Ascending aorta (tissue), 2 donors: ENCODE measurements at regions of chr16 and their contacts with region 1.

Region 1: GRCh38 chr16:77190478-77191258 is at the start of gene MON1B:
- DNase-seq: peak; percentile 96 to 99
- H3K4me3 ChIP-seq: peak within 1 kb of the TSS; percentile 63 to 72
- H3K27ac ChIP-seq: peak within 1 kb of the TSS; percentile 93 to 95
- H3K4me1 ChIP-seq: peaks cover 0 to 11% of the 10 kb centered on the region in 2 donors
- H3K27me3 ChIP-seq: no peaks in the 10 kb centered on the region
- CTCF ChIP-seq: peak in 2 of 3 experiments; percentile 11 to 21
- total RNA-seq, gene MON1B: 31.9 TPM

Region 2: GRCh38 chr16:77132051-77132618 is 58.5 kb before region 1 on chr16:
- intact Hi-C with region 1: no loop called
- DNase-seq: no peak
- H3K4me3 ChIP-seq: no peak overlapping the region
- H3K27ac ChIP-seq: no peak overlapping the region
- H3K4me1 ChIP-seq: no peaks in the 10 kb centered on the region
- H3K27me3 ChIP-seq: no peaks in the 10 kb centered on the region
- CTCF ChIP-seq: no peak

Region 3: DNA sequence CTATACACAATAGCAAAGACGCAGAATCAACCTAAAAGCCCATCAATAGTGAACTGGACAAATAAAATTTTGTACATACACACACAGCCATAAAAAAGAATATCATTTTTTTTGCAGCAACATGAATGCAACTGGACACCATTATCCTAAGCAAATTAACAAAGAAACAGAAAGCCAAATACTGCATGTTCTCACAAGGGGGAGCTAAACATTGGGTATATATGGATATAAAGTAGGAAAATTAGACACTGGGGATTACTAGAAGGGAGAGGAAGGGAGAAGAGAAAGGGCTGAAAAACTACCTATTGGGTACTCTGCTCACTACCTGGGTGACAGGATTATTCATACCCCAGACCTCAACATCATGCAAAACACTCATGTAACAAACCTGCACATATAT is 216.0 kb after region 1 on chr16:
- intact Hi-C with region 1: no loop called
- DNase-seq: no peak
- H3K4me3 ChIP-seq: no peak overlapping the region
- H3K27ac ChIP-seq: no peak overlapping the region
- H3K4me1 ChIP-seq: no peaks in the 10 kb centered on the region
- H3K27me3 ChIP-seq: no peaks in the 10 kb centered on the region
- CTCF ChIP-seq: no peak

Region 4: GRCh38 chr16:77993111-77993985 is 802.7 kb after region 1 on chr16:
- intact Hi-C with region 1: loop called (anchors 5 kb)
- DNase-seq: no peak
- H3K4me3 ChIP-seq: peak overlapping the region in 1 of 2 donors; percentile 6
- H3K27ac ChIP-seq: peak overlapping the region; percentile 84 to 85
- H3K4me1 ChIP-seq: peaks cover 0 to 3% of the 10 kb centered on the region in 2 donors
- H3K27me3 ChIP-seq: no peaks in the 10 kb centered on the region
- CTCF ChIP-seq: no peak

Region 5: DNA sequence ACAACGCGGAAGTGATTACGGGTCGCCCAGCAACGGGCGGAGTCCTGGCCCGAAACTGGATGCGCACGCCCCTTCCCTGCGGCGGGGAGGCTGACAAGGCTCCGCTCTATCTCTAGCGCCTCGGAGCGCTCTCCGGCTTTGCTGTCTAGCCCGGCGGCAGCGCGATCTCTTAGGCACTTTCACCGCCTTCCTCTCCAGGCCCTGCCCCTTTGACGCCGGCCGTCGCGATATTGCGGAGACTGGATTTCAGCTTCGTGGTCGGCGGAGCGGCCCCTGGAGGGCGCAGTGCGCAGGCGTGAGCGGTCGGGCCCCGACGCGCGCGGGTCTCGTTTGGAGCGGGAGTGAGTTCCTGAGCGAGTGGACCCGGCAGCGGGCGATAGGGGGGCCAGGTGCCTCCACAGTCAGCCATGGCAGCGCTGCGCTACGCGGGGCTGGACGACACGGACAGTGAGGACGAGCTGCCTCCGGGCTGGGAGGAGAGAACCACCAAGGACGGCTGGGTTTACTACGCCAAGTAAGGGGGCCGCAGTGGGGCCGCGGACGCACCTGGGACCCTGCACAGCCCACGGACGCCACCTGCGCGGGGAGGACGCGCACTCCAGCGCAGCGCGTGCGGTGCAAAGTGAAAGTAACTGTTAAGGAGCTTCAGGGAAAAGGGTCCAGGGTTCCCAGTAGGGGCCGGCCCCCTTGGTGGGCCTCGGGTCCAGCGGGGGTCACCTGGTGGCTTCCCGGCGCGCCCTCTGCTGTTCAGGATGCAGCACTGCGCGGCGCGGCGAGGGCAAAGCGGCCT is 908.9 kb after region 1 on chr16 and contains the start of gene WWOX:
- intact Hi-C with region 1: loop called (anchors 2 kb)
- DNase-seq: peak; percentile 91 to 99
- H3K4me3 ChIP-seq: peak within 1 kb of the TSS; percentile 67 to 98
- H3K27ac ChIP-seq: peak within 1 kb of the TSS; percentile 88 to 92
- H3K4me1 ChIP-seq: peaks cover 4 to 15% of the 10 kb centered on the region in 2 donors
- H3K27me3 ChIP-seq: no peaks in the 10 kb centered on the region
- CTCF ChIP-seq: peak; percentile 76 to 94 (median 81)
- total RNA-seq, gene WWOX: 106 TPM